ENCODE measurements at regions of chr4 and their contacts with region 1.

Region 1: DNA sequence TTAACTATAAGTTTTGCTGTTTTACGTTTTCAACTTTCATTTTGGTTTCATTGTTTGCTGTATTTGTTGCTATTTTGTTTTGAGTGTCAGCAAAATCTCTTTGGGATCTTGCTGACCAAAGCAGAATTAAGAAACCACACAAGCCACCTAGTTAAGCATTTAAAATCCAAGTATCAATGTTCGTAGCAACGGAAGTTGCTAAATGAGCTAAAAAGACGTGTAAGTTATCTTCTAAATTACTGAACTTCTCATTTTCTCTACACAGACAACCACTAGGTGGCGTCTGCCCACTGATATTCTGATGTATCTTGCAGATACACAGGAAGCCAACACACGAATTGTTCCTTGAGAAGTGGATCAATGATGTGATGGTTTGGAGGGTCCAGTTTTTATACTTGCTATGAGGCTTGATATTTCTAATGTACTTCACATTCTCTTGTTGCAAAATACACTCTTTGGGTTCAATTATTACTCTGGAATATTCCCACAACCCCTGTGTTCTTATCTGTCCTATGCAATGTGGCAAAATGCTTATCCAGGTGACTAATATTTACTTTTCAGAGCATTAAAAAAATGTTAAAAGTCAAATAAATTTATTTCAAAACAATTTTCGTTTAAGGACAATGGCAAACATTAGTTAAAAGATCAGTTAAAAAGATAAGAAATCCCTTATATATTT is 250.5 kb downstream of the TECRL start:
- DNase-seq: peak; percentile 53 to 56
- H3K4me3 ChIP-seq: no peak overlapping the region
- H3K4me3 Mint-ChIP-seq: no peak overlapping the region
- H3K27ac Mint-ChIP-seq: no peak overlapping the region
- H3K4me1 ChIP-seq: no peaks in the 10 kb centered on the region
- H3K4me1 Mint-ChIP-seq: no peaks in the 10 kb centered on the region
- H3K27me3 ChIP-seq: no peaks in the 10 kb centered on the region
- H3K27me3 Mint-ChIP-seq: no peaks in the 10 kb centered on the region
- CTCF ChIP-seq: peak; percentile 70 to 75

Region 2: DNA sequence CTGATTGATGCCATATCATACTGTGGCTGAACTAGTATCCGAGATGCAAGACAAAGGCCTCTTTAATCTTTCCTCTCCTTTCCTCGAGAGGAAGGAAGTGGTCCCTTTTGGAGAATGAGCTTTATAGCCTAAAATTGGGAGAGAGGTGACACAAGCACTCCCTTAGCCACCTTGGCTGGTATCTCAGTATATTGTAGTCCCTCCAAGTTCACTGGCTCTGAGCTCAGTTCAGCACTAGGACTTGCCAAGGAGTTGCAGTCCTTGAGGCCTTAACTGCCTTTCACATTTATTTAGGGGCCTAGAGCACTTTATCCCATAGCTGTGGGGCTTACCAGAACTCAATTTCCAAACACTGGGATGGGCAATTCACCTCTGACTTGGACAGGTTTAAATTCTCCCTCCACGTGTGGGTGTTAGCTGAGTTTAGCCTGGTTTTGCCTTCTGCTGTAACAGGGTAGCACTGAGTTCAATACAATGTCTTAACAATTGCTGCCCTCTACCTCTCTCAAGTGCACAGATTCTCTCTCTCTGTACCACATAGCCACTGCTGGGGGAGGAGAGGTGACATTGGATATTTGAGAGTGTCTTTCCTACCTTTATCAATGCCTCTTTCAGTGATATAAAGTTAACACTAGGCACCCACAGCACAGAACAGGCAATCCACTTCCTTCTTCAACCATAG is 34.1 kb after region 1 on chr4:
- CTCF ChIA-PET with region 1: no interaction called
- POLR2A ChIA-PET with region 1: no interaction called
- intact Hi-C with region 1: loop called (anchors 2 kb)
- DNase-seq: no peak
- H3K4me3 ChIP-seq: no peak overlapping the region
- H3K4me3 Mint-ChIP-seq: no peak overlapping the region
- H3K27ac Mint-ChIP-seq: no peak overlapping the region
- H3K4me1 ChIP-seq: no peaks in the 10 kb centered on the region
- H3K4me1 Mint-ChIP-seq: no peaks in the 10 kb centered on the region
- H3K27me3 ChIP-seq: no peaks in the 10 kb centered on the region
- H3K27me3 Mint-ChIP-seq: peaks cover 3% of the 10 kb centered on the region
- CTCF ChIP-seq: no peak

Region 3: GRCh38 chr4:64584981-64585557 is 426.3 kb after region 1 on chr4:
- CTCF ChIA-PET with region 1: no interaction called
- POLR2A ChIA-PET with region 1: no interaction called
- intact Hi-C with region 1: loop called (anchors 1 kb)
- DNase-seq: peak in 1 of 2 experiments; percentile 3
- H3K4me3 ChIP-seq: no peak overlapping the region
- H3K4me3 Mint-ChIP-seq: no peak overlapping the region
- H3K27ac Mint-ChIP-seq: no peak overlapping the region
- H3K4me1 ChIP-seq: no peaks in the 10 kb centered on the region
- H3K4me1 Mint-ChIP-seq: no peaks in the 10 kb centered on the region
- H3K27me3 ChIP-seq: no peaks in the 10 kb centered on the region
- H3K27me3 Mint-ChIP-seq: no peaks in the 10 kb centered on the region
- CTCF ChIP-seq: peak in 1 of 2 experiments; percentile 53

Region 4: DNA sequence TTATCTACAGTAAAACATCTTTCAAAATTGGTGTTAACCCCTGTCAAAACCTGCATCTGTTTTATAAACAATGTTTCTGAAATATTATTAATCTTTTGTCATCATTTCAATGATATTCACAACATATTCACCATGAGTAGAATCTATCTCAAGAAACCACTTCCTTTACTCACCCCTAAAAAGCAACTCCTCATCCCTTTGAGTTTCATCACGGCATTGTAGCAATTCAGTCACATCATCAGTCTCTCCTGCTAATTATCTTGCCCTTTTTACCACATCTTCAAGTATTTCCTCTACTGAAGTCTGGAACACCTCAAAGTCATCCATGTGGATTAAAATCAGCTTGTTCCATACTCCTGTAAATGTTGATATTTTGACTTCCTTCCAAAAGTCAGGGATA is 665.8 kb after region 1 on chr4:
- CTCF ChIA-PET with region 1: no interaction called
- POLR2A ChIA-PET with region 1: no interaction called
- intact Hi-C with region 1: no loop called
- DNase-seq: no peak
- H3K4me3 ChIP-seq: no peak overlapping the region
- H3K4me3 Mint-ChIP-seq: no peak overlapping the region
- H3K27ac Mint-ChIP-seq: no peak overlapping the region
- H3K4me1 ChIP-seq: no peaks in the 10 kb centered on the region
- H3K4me1 Mint-ChIP-seq: no peaks in the 10 kb centered on the region
- H3K27me3 ChIP-seq: no peaks in the 10 kb centered on the region
- H3K27me3 Mint-ChIP-seq: no peaks in the 10 kb centered on the region
- CTCF ChIP-seq: no peak

Measured in Caco-2 (cell line).